ENCODE measurements at regions of chr13 and their contacts with region 1.

Region 1: DNA sequence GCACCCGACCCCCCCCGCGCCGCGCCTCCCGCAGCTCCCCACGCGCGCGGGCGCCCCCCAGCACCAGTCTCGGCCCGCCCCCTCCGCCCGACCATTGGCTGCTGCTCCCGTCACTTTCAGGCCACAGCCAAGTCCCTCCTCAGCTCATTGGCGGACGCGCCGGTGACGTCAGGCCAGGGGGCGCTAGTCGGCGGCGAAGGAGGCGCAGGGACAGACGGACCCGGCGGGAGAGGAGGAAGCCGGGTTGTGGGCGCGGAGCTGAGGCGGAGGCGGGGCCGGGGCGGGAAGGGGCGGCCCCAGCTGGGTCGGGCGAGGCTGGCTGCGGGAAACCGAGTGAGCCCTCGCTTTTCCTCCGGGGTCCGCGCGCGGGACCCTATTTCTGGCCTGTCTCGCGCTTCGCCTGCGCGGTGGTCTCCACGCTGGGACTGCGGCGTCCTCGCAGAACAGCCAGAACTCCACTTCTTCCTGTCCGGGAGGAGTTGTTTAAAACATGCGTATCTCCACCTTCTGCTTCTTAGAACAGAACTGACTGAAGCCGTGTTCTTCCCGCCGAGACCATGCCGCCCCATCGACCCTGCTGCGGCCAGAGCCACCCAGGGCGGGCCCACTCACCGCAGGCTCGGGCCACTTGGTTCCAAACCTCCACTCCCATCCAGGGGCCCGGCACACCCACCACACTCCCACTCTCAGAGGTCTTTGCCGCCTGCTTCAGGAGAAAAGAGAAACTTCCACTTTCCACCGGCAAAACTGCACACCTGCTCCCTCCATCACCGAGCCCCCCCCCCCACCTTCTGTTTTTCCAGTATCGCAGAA is 459 bp upstream of the TMTC4 start:
- DNase-seq: peak; percentile 98 to 100 (median 99)
- H3K4me3 ChIP-seq: peak overlapping the region; percentile 53 to 74
- H3K4me3 Mint-ChIP-seq: peak overlapping the region; percentile 83 to 95 (median 91)
- H3K27ac ChIP-seq: peak overlapping the region; percentile 73
- H3K27ac Mint-ChIP-seq: peak overlapping the region; percentile 83 to 94 (median 89)
- H3K4me1 ChIP-seq: peaks cover 16% of the 10 kb centered on the region
- H3K4me1 Mint-ChIP-seq: peaks cover 16 to 44% (median 28%) of the 10 kb centered on the region in 4 donors
- H3K27me3 ChIP-seq: no peaks in the 10 kb centered on the region
- H3K27me3 Mint-ChIP-seq: no peaks in the 10 kb centered on the region

Region 2: DNA sequence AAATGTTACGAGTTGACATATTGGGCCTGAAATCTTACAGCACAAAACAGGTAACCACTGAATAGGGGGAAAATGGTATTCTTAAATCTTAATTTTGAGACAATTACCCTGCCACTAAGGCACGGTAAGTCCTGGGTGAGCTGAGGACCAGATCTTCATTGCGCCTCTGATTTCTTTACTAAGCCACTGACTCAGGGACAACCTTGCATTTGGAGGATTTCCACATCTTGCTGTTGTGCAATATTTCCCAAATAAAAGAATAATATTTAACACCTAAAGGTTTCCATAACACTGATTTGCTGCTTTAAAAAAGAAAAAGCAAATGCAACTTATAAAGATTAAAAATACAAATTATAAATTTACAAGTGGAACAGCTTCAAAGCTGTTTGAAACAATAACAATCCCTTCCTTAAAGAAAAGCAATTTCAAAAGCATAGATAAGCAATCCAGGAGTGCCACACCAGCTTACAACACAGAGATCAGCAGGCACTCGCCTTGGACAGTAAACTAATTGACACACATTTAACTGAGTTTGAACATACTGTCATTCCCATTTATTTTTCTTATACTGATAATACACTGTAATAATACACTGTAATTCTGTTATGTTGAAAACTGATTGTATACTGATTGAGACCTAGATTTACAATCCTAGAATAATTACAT is 1617.6 kb before region 1 on chr13:
- CTCF ChIA-PET with region 1: no interaction called
- POLR2A ChIA-PET with region 1: interaction called, 3 read pairs
- intact Hi-C with region 1: loop called (anchors 10 kb)
- DNase-seq: no peak
- H3K4me3 ChIP-seq: no peak overlapping the region
- H3K4me3 Mint-ChIP-seq: peak overlapping the region in 1 of 8 donors; percentile 6
- H3K27ac ChIP-seq: no peak overlapping the region
- H3K27ac Mint-ChIP-seq: peak overlapping the region; percentile 29 to 79 (median 64)
- H3K4me1 ChIP-seq: peaks cover 84% of the 10 kb centered on the region
- H3K4me1 Mint-ChIP-seq: peaks cover 55 to 94% (median 80%) of the 10 kb centered on the region in 4 donors
- H3K27me3 ChIP-seq: no peaks in the 10 kb centered on the region
- H3K27me3 Mint-ChIP-seq: no peaks in the 10 kb centered on the region

Region 3: DNA sequence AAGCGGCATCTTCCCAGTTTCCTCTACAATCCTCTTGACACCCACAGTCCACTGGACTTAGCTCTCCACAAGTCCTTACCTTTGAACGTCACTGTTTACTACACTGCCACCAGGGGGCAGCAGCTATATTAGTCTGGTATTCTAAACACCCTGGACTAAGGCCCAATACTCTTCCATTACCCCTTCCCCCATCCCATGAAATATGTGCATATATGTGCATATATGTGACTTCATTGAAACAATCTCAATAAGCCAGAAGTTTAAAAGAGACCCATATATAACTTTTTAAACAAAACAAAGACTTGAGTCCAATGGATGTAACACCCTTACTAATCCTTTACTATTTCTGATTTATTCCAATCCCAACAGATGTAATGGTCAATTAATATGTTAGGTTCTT is 101.9 kb before region 1 on chr13:
- CTCF ChIA-PET with region 1: interaction called, 8 read pairs
- POLR2A ChIA-PET with region 1: interaction called, 5 read pairs
- intact Hi-C with region 1: loop called (anchors 1 kb)
- DNase-seq: peak; percentile 61 to 76 (median 68)
- H3K4me3 ChIP-seq: no peak overlapping the region
- H3K4me3 Mint-ChIP-seq: no peak overlapping the region
- H3K27ac ChIP-seq: no peak overlapping the region
- H3K27ac Mint-ChIP-seq: no peak overlapping the region
- H3K4me1 ChIP-seq: peaks cover 11% of the 10 kb centered on the region
- H3K4me1 Mint-ChIP-seq: peaks cover 12 to 28% (median 16%) of the 10 kb centered on the region in 4 donors
- H3K27me3 ChIP-seq: no peaks in the 10 kb centered on the region
- H3K27me3 Mint-ChIP-seq: no peaks in the 10 kb centered on the region

Region 4: DNA sequence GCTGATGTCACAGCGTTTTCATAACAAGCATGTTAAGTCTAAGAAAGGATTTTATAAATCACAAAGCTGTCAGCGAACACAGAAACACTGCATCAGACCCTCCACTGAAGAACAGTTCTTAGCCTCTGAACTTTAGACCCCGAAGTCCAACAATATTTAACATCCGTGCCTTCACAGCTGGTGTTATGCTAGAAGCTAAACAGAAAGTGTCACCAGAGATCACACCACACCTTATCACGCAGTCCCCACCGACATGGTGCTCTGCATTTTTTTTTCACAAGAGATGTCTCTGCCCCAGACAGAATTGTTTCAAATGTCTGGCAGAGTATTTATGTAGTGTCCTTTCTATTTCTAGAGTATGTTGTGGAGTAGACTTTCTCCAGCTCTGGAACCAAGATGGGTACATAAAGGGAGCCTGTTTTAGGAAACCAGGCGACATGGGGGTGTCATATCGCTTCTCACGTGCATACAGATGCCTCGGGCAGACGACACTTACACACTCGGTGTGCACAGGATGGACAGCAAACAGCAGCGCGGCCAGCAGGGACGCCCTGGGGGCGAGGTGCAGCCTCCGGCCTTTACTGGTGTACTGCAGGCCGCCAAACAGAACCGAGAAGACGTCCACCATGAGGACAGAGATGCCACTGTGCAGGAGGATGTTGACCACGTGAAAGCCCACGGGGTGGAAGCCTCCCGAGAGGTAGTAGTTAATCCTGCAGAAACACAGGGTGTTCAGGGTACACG is 12.4 kb before region 1 on chr13:
- CTCF ChIA-PET with region 1: interaction called, 5 read pairs
- POLR2A ChIA-PET with region 1: interaction called, 10 read pairs
- intact Hi-C with region 1: no loop called
- DNase-seq: no peak
- H3K4me3 ChIP-seq: no peak overlapping the region
- H3K4me3 Mint-ChIP-seq: no peak overlapping the region
- H3K27ac ChIP-seq: no peak overlapping the region
- H3K27ac Mint-ChIP-seq: no peak overlapping the region
- H3K4me1 ChIP-seq: peaks cover 17% of the 10 kb centered on the region
- H3K4me1 Mint-ChIP-seq: peaks cover 11 to 23% (median 18%) of the 10 kb centered on the region in 4 donors
- H3K27me3 ChIP-seq: no peaks in the 10 kb centered on the region
- H3K27me3 Mint-ChIP-seq: no peaks in the 10 kb centered on the region

Region 5: GRCh38 chr13:102394158-102395053 is 1719.4 kb after region 1 on chr13:
- CTCF ChIA-PET with region 1: no interaction called
- POLR2A ChIA-PET with region 1: no interaction called
- intact Hi-C with region 1: loop called (anchors 10 kb)
- DNase-seq: peak; percentile 93 to 95 (median 94)
- H3K4me3 ChIP-seq: peak overlapping the region; percentile 61 to 93
- H3K4me3 Mint-ChIP-seq: peak overlapping the region; percentile 88 to 94 (median 90)
- H3K27ac ChIP-seq: peak overlapping the region; percentile 59
- H3K27ac Mint-ChIP-seq: peak overlapping the region; percentile 86 to 95 (median 92)
- H3K4me1 ChIP-seq: peaks cover 12% of the 10 kb centered on the region
- H3K4me1 Mint-ChIP-seq: peaks cover 7 to 19% (median 13%) of the 10 kb centered on the region in 4 donors
- H3K27me3 ChIP-seq: peaks cover 9% of the 10 kb centered on the region
- H3K27me3 Mint-ChIP-seq: peaks cover 7% of the 10 kb centered on the region in 2 donors

Measured in CD4-positive, alpha-beta memory T cell (primary cell).